ENCODE measurements at regions of chr1 and their contacts with region 1.

Region 1: GRCh38 chr1:174217787-174218574 is 58.7 kb downstream of the RABGAP1L start:
- DNase-seq: no peak
- CTCF ChIP-seq: peak; percentile 73

Region 2: DNA sequence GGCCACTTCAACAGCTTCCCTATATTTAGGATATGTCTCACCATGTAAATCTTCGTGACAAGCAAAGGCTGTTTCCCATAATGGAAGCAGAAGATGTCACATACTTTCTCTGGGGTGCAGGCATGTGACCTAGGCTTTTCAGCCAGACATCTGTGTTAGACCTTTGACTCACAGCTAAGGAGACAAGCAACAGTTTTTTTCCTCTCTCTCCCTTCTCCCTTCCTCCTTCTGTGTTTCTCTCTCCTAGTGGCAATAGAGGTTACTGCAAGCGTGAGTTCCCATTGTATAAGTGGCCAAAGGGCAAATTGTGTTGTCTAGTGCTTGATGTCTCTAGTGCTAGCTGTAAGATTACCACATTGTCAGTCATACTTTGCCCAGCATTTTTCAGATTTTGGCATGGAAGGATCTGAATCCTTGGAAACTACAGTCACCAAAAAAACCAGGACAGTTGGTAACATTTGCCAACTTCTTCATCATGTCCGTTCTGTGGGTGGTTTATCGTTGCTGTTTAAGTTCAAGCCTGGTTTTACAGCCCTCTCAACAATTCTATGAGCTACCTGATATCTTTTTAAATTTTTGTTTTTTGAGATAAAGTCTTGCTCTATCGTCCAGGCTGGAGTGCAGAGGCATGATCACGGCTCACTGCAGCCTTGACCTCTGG is 103.1 kb before region 1 on chr1:
- CTCF ChIA-PET with region 1: interaction called, 11 read pairs
- POLR2A ChIA-PET with region 1: no interaction called
- DNase-seq: peak; percentile 27
- CTCF ChIP-seq: peak; percentile 61

Region 3: GRCh38 chr1:174159252-174160108 is 58.5 kb before region 1 on chr1 and contains the start of gene RABGAP1L:
- CTCF ChIA-PET with region 1: interaction called, 12 read pairs
- POLR2A ChIA-PET with region 1: no interaction called
- DNase-seq: peak; percentile 90
- CTCF ChIP-seq: no peak

Region 4: DNA sequence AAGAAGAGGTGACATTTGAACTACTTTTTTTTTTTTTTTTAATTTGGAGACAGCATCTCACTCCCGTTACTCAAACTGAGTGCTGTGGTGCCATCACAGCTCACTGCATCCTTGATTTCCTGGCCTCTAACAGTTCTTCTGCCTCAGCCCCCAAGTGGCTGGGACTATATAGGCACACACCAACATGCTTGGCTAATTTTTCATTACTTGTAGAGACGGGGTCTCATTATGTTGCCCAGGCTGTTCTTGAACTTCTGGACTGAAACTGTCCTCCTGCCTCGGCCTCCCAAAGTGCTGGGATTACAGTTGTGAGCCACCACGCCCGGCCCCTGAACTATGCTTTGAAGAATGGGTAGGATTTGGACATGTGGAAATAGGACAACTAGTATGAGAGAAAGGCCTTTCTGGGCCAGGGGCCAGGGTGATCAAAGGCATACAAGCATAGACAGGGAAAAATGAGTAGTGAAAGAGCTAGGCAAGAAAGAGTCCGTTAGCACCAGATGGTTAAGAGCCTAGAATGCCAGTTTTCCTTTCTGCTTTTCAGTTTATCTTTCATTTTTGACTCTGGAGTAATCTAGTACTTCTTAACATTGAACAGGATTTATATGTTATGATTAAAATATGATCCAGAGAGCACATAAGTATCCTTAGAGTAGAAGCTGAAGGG is 52.4 kb before region 1 on chr1:
- CTCF ChIA-PET with region 1: interaction called, 12 read pairs
- POLR2A ChIA-PET with region 1: no interaction called
- DNase-seq: no peak
- CTCF ChIP-seq: peak; percentile 21

Region 5: DNA sequence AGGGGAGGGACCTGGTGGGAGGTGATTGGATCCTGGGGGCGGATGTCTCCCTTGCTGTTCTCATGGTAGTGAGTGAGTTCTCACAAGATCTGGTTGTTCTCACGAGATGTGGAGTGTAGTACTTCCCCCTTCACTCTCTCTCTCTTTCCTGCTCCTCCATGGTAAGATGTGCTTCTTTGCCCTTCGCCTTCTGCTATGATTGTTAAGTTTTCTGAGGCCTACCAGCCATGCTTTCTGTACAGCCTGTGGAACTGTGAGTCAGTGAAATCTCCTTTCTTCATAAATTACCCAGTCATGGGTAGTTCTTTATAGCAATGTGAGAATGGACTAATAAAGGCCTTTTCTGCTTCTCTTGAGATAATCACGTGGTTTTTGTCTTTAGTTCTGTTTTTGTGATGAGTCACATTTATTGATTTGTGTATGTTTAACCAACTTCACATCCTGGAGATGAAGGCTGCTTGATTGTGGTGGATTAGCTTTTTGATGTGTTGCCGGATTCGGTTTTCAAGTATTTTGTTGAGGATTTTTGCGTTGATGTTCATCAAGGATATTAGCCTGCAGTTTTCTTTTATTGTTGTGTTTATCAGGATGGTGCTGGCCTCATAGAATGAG is 13.2 kb before region 1 on chr1:
- CTCF ChIA-PET with region 1: interaction called, 41 read pairs
- POLR2A ChIA-PET with region 1: no interaction called
- DNase-seq: no peak
- CTCF ChIP-seq: no peak

Region 6: DNA sequence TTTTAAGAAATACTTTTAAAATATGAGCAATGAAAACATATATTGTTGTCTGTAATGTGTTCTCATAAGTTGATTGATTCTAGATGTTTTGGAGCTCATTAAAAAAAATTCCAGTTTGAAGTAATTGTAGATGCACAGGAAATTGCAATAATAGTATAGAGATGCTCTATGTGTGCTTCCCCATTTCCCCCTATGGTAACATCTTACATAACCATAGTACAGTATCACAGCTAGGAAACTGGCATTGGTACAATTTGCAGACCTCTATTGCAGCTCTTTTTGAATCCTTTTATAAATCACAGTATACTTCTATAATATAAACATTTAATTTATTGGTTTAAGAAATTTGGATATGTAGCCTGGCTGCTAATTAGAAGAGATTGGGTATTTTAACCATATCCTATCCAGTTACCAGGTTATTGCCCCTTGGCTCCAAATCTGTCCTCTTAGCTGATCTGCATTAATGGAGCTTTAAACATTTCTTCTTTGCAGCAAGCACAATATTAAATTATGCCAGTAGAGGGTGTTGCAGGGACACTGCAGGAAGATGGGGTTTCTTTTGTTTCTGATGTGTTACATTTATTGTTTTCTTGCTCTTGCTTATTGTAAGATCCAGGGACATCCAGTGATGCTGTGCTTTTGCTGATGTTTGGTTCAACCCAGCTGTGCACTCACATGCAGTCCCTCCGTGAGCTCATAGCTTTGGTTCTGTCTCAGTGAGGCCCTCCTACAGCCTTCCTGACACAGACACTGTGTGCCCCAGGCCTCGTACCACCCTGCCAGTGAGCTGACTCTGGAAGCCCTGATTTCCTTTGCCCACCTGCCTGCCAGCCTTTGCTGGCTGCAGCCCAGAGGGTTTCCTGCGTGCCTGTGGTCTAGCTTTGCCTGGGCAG is 44.6 kb after region 1 on chr1:
- CTCF ChIA-PET with region 1: interaction called, 11 read pairs
- POLR2A ChIA-PET with region 1: no interaction called
- DNase-seq: peak; percentile 54
- CTCF ChIP-seq: peak; percentile 71

Measured in GM10248 (cell line).